Activated CD8-positive, alpha-beta T cell treated with anti-CD3 and anti-CD28 coated beads, Interleukin-2, amount 10 ng/mL, durations not matched to agents 7 days and 5 days (primary cell): ENCODE measurements at regions of chr15 and their contacts with region 1.

Region 1: DNA sequence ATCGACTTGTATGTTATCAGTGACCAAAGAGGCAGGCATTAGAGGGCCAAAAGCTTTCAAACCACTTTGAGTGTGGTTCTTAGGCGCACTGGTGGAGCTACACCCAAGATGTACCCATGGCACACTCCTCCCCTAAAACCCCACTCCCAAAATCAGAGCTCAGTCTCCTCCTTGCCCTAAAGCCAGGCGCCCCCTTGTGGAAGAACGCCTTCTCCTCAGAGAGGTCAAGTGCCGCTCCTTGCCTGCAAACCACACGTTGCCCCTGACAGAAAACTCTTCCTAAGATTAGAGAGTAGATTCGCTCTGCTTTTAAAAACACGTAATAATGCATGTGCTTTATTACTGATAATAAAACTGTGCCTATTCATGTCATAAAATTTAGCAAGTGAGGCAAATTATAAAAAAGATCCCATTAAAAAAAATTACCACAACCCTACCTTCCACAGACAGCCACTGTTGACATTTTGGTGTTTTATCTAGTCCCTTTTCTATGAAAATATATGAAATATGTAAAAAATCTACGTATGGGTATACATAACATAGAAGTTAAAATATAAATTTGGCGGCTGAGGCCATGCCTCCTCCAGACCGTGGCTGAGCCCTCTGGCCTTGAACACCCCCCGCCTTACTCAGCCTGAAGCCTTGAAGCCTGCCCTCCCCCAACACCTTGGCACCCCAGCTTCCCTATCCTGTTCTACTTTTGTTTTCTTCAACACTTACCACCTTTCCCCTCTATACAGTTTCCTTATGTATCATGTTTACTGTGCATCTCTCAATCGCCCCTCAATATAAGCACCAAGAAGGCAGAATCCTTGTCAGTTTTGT is 33.5 kb downstream of the BCL2L10 start:
- DNase-seq: peak; percentile 86
- ATAC-seq: peak; percentile 75
- H3K4me3 Mint-ChIP-seq: no peak overlapping the region
- H3K27ac Mint-ChIP-seq: no peak overlapping the region
- H3K4me1 Mint-ChIP-seq: peaks cover 30% of the 10 kb centered on the region
- H3K27me3 Mint-ChIP-seq: no peaks in the 10 kb centered on the region

Region 2: DNA sequence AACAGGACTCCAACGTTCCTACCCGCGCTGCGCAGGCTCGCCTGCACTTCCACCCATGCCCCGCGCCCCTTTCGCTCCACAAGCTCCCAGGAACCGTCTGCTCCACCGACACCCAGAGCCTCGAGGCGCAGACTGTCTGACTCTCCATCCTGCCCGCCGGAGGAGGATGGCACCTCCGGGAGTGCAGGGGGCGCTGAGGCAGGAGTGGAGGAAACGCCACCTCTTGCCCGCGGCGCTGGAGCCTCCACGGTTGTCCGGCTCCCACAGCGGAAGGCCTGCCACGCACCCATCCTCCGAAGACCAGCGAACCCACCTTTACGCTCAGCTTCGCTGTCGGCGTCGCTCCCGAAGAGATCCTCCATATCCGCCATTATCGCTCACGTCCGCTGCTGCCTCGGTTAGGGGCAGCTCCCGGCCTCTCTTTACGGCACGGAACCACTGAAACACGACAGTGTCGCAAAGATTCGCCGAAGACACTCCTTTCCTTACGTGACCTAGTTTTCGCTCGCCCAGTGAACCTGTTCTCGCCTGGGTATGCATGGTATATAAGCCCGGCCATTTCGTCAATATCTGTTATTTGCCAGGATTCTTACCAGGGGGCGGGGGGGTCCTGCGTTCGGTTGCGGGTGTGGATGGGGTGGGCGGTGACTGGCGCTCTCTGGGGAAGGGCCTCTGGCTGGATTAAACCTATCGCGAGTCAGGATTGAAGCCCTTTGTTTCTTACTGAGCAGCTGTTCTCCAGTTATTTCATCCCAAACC is 107.5 kb before region 1 on chr15 and contains the start of gene LEO1:
- CTCF ChIA-PET with region 1: interaction called, 22 read pairs
- POLR2A ChIA-PET with region 1: interaction called, 5 read pairs
- DNase-seq: peak; percentile 95
- ATAC-seq: peak; percentile 88
- H3K4me3 Mint-ChIP-seq: peak within 1 kb of the TSS; percentile 88
- H3K27ac Mint-ChIP-seq: peak within 1 kb of the TSS; percentile 89
- H3K4me1 Mint-ChIP-seq: peaks cover 23% of the 10 kb centered on the region
- H3K27me3 Mint-ChIP-seq: no peaks in the 10 kb centered on the region
- total RNA-seq, gene LEO1: 30.3 to 33.4 TPM

Region 3: DNA sequence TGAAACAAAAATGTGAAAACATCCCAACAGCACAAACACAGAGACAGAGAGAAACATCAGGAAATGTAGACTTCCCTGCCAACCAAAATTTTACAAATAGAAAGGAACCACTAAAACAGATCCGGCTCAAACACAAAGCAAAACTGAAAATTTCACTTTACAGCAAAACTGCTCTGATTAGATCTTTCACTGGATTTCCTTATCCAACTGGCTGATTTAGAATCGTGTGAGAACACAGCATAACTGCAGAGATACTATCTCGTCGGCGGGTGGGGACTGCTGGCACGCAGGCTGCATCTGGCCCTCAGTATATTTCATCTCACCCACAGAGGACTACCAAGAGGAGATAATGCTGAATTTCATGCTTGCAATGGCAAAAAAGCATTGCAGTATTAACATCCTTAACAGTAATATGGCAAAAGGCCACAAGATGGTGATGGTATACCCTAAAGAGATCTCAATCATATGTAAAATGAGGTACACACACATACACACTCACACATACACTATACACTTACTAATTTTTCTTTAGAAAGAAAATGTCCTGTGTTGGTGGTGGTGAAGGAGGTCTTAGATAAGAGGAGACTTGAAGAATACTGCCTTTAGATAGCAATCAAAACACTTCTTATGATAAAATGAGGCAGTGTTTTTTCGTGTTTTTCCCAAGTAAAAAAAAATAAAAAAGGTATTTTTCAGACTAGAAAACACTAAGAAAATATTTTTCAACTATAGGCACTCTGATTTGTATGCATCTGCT is 96.9 kb before region 1 on chr15:
- CTCF ChIA-PET with region 1: interaction called, 40 read pairs
- POLR2A ChIA-PET with region 1: no interaction called
- DNase-seq: peak; percentile 77
- ATAC-seq: peak; percentile 99
- H3K4me3 Mint-ChIP-seq: peak overlapping the region; percentile 54
- H3K27ac Mint-ChIP-seq: peak overlapping the region; percentile 89
- H3K4me1 Mint-ChIP-seq: peaks cover 16% of the 10 kb centered on the region
- H3K27me3 Mint-ChIP-seq: no peaks in the 10 kb centered on the region

Region 4: DNA sequence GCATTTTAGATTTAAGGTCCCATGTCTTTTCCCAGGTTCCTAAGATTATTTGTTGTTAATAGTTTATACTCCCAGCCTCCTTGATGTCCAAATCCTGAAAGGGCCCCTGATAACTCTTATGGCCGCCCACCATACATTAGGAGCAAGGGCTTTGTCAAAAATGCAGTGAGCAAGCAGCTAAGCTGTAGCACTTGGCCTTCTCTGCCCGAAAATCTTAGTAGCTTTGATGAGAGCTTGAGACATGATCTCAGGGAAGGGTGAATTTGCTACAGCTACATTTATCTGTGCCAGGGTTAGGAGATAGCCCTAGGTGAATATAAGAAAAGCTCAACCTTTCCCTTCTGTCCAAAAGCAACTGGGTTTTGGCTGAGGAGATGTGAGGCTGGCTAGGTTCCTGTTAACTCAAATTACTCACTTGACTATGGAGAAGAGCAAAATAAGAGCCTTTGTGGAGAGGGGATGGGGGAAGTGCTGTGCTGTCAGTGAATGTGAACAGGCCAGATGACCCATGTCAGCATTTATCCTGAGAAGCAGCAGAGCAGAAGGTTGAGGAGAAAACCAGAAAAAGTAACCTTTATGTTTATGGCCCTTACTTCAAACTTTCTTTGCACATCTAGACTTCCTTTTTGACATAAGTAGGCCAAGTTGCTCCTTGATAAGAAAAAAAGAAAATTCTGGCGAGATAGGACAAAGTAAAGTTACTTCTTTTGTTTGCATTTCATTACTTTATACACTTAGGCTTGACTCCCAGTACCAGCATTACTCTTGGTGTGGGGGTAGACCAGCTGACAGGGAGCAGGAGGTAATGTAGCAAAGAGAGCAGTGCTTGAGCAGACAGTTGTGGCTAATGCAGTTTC is 38.9 kb before region 1 on chr15:
- CTCF ChIA-PET with region 1: interaction called, 28 read pairs
- POLR2A ChIA-PET with region 1: no interaction called
- DNase-seq: no peak
- ATAC-seq: no peak
- H3K4me3 Mint-ChIP-seq: no peak overlapping the region
- H3K27ac Mint-ChIP-seq: peak overlapping the region; percentile 3
- H3K4me1 Mint-ChIP-seq: peaks cover 28% of the 10 kb centered on the region
- H3K27me3 Mint-ChIP-seq: no peaks in the 10 kb centered on the region

Region 5: DNA sequence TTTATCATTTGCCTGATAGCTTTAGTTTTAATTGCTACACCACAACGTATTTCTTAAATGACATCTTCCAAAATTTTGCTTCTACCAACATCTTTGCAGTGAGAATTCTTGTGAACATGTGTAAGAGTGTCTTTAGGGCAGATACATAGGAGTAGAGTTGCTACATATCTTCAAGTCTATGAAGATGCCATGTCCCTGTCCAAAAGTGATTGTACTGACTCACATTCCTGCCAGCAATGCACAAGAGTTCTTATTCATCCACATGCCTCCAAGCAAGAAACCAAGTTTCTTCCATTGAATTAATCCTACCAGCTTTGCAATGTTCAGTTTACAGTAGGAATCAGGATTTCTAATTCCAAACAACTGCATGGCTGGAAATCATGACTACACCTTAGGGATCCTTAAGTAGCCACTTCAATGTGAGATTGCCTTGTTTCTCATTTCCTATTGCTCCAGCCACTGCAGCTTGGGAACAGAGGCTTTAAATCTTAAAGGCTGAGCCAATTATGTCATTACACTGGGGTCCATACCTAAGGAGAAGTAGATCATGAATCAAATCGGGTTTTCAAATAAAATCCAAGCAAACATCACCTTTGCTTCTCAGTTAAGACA is 11.0 kb before region 1 on chr15:
- CTCF ChIA-PET with region 1: interaction called, 58 read pairs
- POLR2A ChIA-PET with region 1: interaction called, 3 read pairs
- DNase-seq: no peak
- ATAC-seq: no peak
- H3K4me3 Mint-ChIP-seq: no peak overlapping the region
- H3K27ac Mint-ChIP-seq: no peak overlapping the region
- H3K4me1 Mint-ChIP-seq: peaks cover 14% of the 10 kb centered on the region
- H3K27me3 Mint-ChIP-seq: peaks cover 3% of the 10 kb centered on the region

Region 6: DNA sequence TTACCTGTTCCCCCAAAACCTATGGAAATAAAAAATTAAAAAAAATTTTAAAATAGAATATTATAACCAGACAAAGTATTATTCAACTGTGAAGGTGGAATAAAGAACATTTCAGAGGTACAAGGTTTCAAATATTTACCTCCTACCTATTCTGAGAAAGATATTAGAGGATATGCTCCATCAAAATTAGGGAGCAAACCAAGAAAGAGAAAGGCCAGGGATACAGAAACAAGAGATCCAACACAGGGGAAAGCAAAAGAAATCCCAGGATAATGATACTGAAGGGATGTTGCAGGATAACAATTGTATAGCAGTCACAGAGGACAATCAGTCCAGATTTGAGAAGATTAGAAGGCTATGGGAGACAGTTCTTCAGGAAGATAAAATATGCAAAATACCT is 11.1 kb after region 1 on chr15:
- CTCF ChIA-PET with region 1: interaction called, 10 read pairs
- POLR2A ChIA-PET with region 1: interaction called, 3 read pairs
- DNase-seq: no peak
- ATAC-seq: no peak
- H3K4me3 Mint-ChIP-seq: no peak overlapping the region
- H3K27ac Mint-ChIP-seq: no peak overlapping the region
- H3K4me1 Mint-ChIP-seq: no peaks in the 10 kb centered on the region
- H3K27me3 Mint-ChIP-seq: peaks cover 13% of the 10 kb centered on the region

Region 7: DNA sequence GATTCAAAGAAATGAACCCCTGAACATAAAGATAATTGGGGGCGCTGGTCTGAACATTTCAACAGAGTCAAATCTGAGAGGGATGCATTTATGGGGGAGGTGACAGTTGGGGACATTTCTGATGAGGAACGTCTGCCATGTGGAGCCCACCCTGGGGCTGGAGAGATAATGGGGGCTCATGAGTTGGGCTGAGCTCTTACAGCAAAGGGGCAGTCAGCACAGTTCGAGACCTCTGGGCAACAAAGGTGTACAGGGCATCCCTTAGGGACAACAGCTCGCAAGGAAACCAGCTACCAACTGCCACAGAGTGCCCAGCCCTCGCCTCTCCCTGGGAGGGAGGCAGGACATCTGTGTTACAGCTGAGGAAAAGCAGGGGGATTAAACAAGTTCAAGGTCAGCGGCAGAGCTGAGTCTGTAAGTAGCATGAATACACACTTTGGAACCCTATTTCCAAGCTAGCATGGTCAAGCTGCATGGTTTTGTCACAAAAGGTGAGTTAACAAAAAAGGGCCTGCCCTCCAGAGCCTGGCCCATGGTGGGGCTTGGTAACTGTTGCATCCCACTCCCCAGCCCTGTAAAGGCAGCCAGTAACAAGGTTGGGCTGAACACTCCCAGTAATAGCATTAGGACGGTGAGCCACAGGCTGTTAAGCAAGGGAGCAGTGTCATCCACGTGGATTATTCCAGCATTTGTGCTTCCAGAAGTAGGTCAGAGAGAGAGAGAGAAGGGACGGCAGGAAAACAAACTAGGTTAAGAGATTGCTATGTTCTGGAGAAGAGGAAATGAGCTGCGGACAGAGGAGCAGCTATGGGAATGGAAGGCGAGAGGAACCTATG is 107.8 kb after region 1 on chr15:
- CTCF ChIA-PET with region 1: no interaction called
- POLR2A ChIA-PET with region 1: no interaction called
- DNase-seq: no peak
- ATAC-seq: no peak
- H3K4me3 Mint-ChIP-seq: no peak overlapping the region
- H3K27ac Mint-ChIP-seq: no peak overlapping the region
- H3K4me1 Mint-ChIP-seq: peaks cover 7% of the 10 kb centered on the region
- H3K27me3 Mint-ChIP-seq: no peaks in the 10 kb centered on the region

Region 8: GRCh38 chr15:52208306-52208946 is 129.3 kb after region 1 on chr15:
- CTCF ChIA-PET with region 1: interaction called, 15 read pairs
- POLR2A ChIA-PET with region 1: no interaction called
- DNase-seq: peak; percentile 86
- ATAC-seq: peak; percentile 98
- H3K4me3 Mint-ChIP-seq: no peak overlapping the region
- H3K27ac Mint-ChIP-seq: no peak overlapping the region
- H3K4me1 Mint-ChIP-seq: peaks cover 11% of the 10 kb centered on the region
- H3K27me3 Mint-ChIP-seq: no peaks in the 10 kb centered on the region